Posterior vena cava (tissue), 2 donors: ENCODE measurements at regions of chr5 and their contacts with region 1.

Region 1: DNA sequence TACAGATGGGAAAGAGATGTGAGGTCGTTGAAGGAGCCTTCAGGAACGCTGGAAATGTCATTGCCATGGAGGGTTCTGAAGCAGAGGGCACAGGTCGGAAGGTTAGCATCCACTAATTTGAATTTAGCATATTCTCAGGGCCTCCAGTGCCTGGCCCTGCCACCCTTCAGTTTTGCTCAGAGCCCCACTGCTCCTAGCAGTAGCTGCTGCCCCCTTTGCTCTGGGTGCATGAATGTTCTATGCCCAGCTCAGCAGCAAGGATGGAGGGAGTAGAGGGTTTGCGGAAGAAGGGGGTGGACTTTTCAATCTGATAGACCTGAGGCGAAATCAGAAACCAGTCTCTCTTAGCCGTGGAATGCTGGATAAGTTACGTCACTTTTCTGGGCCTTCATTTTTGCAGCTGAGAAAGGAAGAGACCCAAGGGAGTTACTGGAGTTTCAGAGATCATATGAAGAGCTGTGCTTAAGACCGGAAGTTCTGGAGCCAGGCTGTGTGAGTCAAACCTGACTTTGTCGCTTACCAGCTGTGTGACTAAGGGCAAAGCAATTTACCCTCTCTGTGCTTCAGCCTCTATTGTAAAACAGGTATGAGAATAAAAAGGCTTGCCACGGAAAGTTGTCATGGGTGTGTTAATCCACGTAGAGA is 133.2 kb upstream of the PANK3 start:
- DNase-seq: peak; percentile 68

Region 2: DNA sequence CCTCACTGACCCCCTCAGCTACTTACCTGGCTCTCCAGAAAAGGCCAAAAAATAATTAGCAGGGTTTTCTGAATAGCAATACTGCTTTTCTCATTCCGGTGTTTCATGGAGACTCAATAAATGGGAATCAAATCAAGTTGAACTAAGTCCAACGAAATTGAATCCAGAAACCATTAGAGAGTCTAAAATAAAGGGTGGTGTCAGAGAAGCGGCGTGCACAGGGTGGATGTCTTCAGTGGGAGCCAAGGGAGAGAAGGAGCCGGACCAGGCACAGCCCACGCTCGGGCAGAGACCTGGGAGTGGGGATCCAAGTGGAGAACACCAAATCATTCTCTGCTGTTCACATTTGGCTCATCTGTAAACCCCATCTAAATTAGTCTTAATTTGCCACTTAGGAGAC is 461.1 kb before region 1 on chr5:
- intact Hi-C with region 1: loop called in 1 of 2 experiments (anchors 10 kb)
- DNase-seq: no peak

Region 3: GRCh38 chr5:168472329-168472728 is 240.1 kb before region 1 on chr5:
- intact Hi-C with region 1: no loop called
- DNase-seq: no peak

Region 4: DNA sequence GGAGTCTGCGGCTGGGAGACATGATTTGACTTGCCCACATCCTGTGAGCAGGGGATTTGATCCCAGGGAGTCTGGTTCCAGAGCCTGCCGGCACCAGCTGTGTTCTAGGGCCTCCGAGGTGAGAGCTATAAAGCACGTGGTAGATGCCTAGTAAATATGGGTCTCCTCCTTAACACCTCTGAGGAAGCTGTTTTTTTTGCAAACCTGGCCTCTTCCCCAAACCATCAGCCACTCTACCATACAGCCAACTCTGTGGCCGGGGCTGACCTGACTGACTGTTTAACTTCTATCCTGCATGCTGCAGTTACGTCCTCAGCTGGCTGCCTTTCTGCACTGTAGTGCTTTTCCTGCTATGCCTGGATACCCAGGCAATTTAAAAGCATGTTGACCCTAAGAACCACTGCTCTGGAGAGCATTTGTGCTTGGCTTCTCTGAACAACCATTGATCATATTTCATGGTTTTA is 368.1 kb after region 1 on chr5:
- intact Hi-C with region 1: no loop called
- DNase-seq: no peak